Activated CD4-positive, alpha-beta T cell treated with anti-CD3 and anti-CD28 coated beads for 36 hours (primary cell): ENCODE measurements at regions of chr6 and their contacts with region 1.

Region 1: GRCh38 chr6:111973118-111973761 is 80.7 kb upstream of the CCN6 start:
- DNase-seq: peak; percentile 80
- ATAC-seq: peak; percentile 84
- H3K4me3 Mint-ChIP-seq: peak overlapping the region; percentile 65
- H3K27ac Mint-ChIP-seq: peak overlapping the region; percentile 90
- H3K4me1 Mint-ChIP-seq: peaks cover 73% of the 10 kb centered on the region
- H3K27me3 Mint-ChIP-seq: no peaks in the 10 kb centered on the region

Region 2: GRCh38 chr6:111873178-111874024 is 99.8 kb before region 1 on chr6 and contains the start of gene FYN:
- CTCF ChIA-PET with region 1: no interaction called
- POLR2A ChIA-PET with region 1: interaction called, 11 read pairs
- intact Hi-C with region 1: loop called (anchors 2 kb)
- DNase-seq: peak; percentile 100
- ATAC-seq: peak; percentile 87
- H3K4me3 Mint-ChIP-seq: peak within 1 kb of the TSS; percentile 98
- H3K27ac Mint-ChIP-seq: peak within 1 kb of the TSS; percentile 91
- H3K4me1 Mint-ChIP-seq: peaks cover 35% of the 10 kb centered on the region
- H3K27me3 Mint-ChIP-seq: no peaks in the 10 kb centered on the region
- total RNA-seq, gene FYN: 345 to 504 TPM

Region 3: DNA sequence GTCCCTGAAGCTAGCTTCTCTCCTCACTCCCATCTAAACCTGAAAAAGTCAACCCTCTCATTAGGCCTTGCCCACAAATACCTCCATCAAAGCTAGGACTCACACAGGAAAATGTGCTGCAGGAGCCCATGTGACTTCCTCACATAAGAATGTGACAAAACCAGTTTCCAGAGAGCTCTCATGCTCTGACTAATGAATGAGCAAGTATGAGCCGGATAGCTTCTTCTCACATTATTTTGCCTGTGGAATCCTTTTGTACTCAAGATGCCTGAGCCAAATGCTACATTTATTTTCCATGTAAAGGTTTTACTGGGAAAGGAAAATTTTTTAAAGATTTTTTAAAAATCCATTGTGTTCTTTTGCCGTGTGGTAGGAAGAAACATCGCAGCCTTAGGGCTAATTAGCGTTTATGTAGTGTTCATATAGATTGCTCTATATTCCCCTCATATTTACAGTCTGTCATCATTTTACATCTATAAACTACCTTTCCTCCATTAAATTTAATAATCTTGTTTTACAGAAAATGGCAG is 12.0 kb after region 1 on chr6:
- CTCF ChIA-PET with region 1: interaction called, 17 read pairs
- POLR2A ChIA-PET with region 1: interaction called, 5 read pairs
- intact Hi-C with region 1: loop called in 1 of 2 experiments (anchors 1 kb)
- DNase-seq: peak; percentile 63
- ATAC-seq: peak; percentile 87
- H3K4me3 Mint-ChIP-seq: no peak overlapping the region
- H3K27ac Mint-ChIP-seq: peak overlapping the region; percentile 94
- H3K4me1 Mint-ChIP-seq: peaks cover 83% of the 10 kb centered on the region
- H3K27me3 Mint-ChIP-seq: no peaks in the 10 kb centered on the region

Region 4: DNA sequence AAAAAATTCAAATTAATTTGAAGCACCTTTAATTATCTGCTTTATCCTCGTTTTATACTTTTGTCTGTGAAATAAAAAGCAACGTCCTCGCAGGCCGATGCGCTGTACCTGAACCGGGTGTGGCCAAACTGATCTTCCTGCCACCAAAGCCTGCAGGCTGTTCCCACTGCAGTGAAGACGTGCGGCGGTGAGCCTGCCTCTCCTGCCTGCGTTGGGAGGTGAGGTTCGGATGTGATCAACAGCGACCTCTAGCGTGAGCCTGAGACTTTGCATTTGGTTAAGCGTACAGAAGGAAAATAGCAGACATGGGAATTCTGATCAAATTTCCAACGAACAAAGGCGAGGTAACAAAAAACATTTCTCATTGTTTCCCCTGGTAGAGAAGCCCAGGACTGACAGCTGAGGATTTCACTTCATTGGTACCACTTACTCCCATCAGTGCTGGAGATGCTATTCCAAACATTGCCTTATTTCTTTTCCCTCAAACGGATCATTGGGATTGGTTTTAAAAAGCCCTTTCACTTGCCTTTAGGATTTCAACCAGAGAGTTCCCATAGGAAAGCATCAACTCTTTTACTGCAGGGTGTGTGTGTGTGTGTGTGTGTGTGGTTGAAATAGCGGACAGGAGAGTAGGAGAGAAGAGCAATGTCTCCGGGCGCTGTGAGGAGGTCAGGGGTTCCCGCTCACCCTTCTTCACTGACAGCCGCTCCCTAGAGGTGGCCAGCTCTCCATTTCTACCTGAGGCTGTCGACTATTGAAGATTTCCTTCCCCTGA is 24.0 kb after region 1 on chr6:
- CTCF ChIA-PET with region 1: interaction called, 16 read pairs
- POLR2A ChIA-PET with region 1: interaction called, 5 read pairs
- intact Hi-C with region 1: loop called (anchors 1 to 2 kb)
- DNase-seq: peak; percentile 89
- ATAC-seq: peak; percentile 71
- H3K4me3 Mint-ChIP-seq: peak overlapping the region; percentile 43
- H3K27ac Mint-ChIP-seq: peak overlapping the region; percentile 72
- H3K4me1 Mint-ChIP-seq: peaks cover 51% of the 10 kb centered on the region
- H3K27me3 Mint-ChIP-seq: no peaks in the 10 kb centered on the region

Region 5: DNA sequence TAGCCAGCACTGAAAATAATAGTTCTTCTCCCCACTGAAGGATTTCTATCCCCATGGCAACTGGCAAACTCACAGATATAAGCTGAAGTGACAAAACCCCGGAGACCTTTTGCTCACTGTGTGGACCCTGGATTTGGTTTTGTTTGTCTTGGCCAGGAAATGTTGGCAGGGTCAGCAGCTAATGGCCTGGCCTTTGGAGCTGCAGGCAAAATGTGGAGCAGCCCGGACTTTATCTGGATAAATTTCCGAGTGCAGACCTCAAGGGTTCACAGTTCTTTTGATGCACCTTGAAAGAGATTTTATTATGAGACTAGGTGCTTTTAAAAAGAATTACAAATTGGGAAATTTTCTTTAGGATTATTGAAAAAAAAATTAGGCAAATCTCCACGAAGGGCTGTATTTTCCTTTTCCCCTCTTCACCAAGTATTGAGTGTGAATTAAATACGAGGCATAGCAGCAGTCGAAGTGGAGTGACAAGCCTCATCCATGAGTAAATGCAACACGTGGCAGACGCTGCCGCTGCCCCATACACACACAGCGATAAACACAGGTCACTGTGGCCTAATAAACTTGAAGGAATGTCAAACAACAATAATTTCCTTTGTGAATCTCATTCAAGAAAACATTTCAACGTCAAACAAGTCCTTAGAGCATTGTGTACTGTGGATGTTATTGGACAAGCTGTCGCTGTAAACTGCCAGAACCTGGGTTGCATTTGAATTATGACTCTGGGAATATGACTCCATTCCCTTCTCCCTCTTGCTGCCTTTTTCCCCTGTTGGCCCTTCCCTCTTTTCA is 45.6 kb after region 1 on chr6:
- CTCF ChIA-PET with region 1: no interaction called
- POLR2A ChIA-PET with region 1: interaction called, 3 read pairs
- intact Hi-C with region 1: loop called in 1 of 2 experiments (anchors 1 kb)
- DNase-seq: no peak
- ATAC-seq: no peak
- H3K4me3 Mint-ChIP-seq: no peak overlapping the region
- H3K27ac Mint-ChIP-seq: peak overlapping the region; percentile 43
- H3K4me1 Mint-ChIP-seq: peaks cover 78% of the 10 kb centered on the region
- H3K27me3 Mint-ChIP-seq: no peaks in the 10 kb centered on the region

Region 6: GRCh38 chr6:112029045-112029822 is 56.0 kb after region 1 on chr6:
- CTCF ChIA-PET with region 1: no interaction called
- POLR2A ChIA-PET with region 1: no interaction called
- intact Hi-C with region 1: loop called in 1 of 2 experiments (anchors 2 kb)
- DNase-seq: peak; percentile 90
- ATAC-seq: peak; percentile 20
- H3K4me3 Mint-ChIP-seq: no peak overlapping the region
- H3K27ac Mint-ChIP-seq: peak overlapping the region; percentile 87
- H3K4me1 Mint-ChIP-seq: peaks cover 76% of the 10 kb centered on the region
- H3K27me3 Mint-ChIP-seq: no peaks in the 10 kb centered on the region

Region 7: DNA sequence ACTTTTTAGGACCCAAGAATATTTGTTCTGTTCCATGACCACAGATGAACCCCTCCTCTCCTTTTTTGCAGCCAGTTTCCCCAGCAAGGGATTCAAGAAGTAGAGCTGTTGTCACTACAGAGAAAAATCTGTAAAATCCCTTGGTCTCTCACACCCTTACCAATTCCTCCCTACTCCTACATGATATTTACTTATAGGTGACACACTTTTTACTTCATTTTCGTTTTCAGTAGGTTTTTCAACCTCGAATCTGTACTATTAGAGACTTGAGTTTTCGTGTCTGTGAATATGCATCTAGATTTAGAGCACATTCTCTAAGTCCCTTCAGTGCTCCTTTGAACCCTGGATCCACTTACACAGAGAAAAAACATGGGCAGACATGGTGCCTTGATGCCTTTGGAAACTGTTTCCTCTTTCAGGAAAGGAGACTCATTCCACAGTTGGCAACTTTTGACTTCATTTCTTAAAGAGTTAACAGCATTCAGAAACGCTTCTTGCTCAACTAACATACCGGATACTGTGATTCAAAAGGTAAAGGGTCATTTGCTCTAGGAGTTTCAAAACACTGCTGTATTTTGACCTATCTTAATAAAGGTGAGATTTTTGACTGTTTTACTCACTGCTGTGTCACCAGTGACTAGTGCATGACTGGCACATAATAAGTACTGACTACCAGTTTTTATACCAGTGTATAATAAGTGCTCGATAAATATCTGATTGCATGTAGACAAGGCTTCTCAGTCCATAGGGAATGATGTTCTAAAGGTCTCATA is 230.5 kb after region 1 on chr6:
- CTCF ChIA-PET with region 1: no interaction called
- POLR2A ChIA-PET with region 1: no interaction called
- intact Hi-C with region 1: no loop called
- DNase-seq: no peak
- ATAC-seq: peak; percentile 33
- H3K4me3 Mint-ChIP-seq: no peak overlapping the region
- H3K27ac Mint-ChIP-seq: no peak overlapping the region
- H3K4me1 Mint-ChIP-seq: no peaks in the 10 kb centered on the region
- H3K27me3 Mint-ChIP-seq: peaks cover 17% of the 10 kb centered on the region